ENCODE measurements at regions of chr15 and their contacts with region 1.

Region 1: GRCh38 chr15:41331833-41332787 is at the start of gene OIP5:
- DNase-seq: peak; percentile 99
- H3K4me3 ChIP-seq: peak within 1 kb of the TSS; percentile 38 to 89 (median 42)
- H3K27ac ChIP-seq: no peak within 1 kb of the TSS
- H3K4me1 ChIP-seq: peaks cover 6 to 17% of the 10 kb centered on the region in 2 donors
- H3K27me3 ChIP-seq: no peaks in the 10 kb centered on the region
- CTCF ChIP-seq: peak; percentile 50 to 74 (median 70)
- POLR2A ChIP-seq: no peak
- total RNA-seq, gene OIP5: 0.78 to 1.6 TPM in 2 of 4 donors, not detected in the others

Region 2: GRCh38 chr15:41283653-41284426 is 48.3 kb before region 1 on chr15:
- intact Hi-C with region 1: loop called (anchors 5 kb)
- DNase-seq: peak; percentile 98 to 99
- H3K4me3 ChIP-seq: peak overlapping the region; percentile 7 to 100 (median 80)
- H3K27ac ChIP-seq: peak overlapping the region; percentile 65 to 92 (median 91)
- H3K4me1 ChIP-seq: peaks cover 6 to 12% of the 10 kb centered on the region in 2 donors
- H3K27me3 ChIP-seq: no peaks in the 10 kb centered on the region
- CTCF ChIP-seq: no peak
- POLR2A ChIP-seq: peak; percentile 41 to 95

Region 3: GRCh38 chr15:41634072-41634626 is 302.0 kb after region 1 on chr15:
- intact Hi-C with region 1: no loop called
- DNase-seq: no peak
- H3K4me3 ChIP-seq: no peak overlapping the region
- H3K27ac ChIP-seq: no peak overlapping the region
- H3K4me1 ChIP-seq: no peaks in the 10 kb centered on the region
- H3K27me3 ChIP-seq: no peaks in the 10 kb centered on the region
- CTCF ChIP-seq: no peak
- POLR2A ChIP-seq: no peak

Measured in thyroid gland (tissue), 4 donors.